Tibial artery (tissue), 4 donors: ENCODE measurements at regions of chr2 and their contacts with region 1.

Region 1: DNA sequence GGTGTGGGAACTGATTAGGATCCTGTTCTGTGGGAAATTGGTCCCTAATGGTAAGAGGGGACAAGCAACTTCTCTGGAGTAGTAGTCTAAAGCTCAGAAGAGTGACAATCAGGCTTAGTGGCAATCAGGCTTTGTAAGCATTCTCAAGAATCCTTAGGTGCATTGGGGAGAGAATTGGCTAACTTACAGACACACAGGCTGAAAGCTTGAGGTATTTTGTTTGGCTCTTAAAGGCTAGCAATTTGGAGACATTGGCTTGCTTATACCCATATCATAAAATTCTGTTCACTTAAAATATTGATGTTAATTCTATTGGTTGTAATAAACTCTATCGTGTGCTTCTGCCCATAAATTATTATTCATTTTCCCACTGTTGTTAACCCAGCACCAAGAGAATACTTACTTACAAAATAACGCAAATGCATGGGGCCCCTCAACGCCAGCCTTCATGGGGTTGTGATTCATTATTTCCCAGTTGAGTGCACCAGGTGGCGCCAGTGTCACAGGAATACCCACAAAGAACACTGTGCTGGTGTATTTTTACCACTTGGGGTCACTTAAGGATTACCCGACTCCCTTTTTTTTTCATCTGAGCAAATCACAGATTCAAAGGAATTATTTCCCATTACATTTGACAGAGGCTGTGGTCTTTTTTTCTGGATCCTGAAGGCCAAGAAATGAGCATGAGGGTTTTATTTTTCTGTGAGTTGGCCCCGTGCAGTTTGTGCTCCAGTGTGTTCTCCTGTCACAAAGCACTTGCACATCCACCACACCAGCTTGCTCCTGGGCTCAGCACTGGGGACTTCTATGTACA is 45.5 kb downstream of the DDX1 start:
- DNase-seq: peak; percentile 75 to 83
- H3K4me3 ChIP-seq: no peak overlapping the region
- H3K27ac ChIP-seq: peak overlapping the region in 1 of 2 donors; percentile 42
- H3K4me1 ChIP-seq: peaks cover 0 to 69% (median 31%) of the 10 kb centered on the region in 4 donors
- H3K27me3 ChIP-seq: no peaks in the 10 kb centered on the region
- CTCF ChIP-seq: peak; percentile 80 to 95

Region 2: DNA sequence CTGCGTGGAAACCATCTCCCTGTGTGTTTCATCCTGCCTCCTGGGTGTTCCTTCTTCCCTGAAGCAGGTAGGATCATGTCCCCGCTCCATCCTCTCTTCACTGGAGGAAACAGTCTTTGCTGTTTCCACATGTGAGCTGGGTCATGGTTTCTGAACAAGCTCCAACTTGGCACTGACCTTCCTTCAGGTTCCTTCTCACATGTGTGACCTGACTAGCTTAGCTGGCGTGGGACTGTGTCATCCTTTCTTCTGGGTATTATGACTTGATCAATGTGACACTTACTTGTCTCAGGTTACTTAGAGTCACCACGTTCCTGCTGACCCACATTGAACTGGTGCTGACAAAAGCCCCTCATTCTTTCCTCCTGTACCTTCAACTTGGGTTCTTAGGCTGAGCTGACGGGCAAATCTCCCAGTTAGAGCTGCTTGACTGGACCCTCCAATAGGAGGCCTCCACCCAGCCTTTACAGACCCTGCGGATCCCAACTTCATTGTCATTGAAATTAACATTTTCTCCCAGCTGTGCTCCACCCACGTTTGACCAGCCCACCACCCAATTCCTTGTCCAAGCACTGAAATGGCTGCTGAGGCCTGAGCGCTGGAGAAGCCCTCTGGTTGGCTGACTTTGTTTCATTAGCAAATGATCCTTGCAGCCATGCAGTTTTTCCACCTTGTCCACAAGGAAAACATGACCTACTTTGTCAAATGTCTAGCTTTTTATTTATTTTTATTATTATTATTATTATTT is 82.6 kb after region 1 on chr2:
- intact Hi-C with region 1: no loop called
- DNase-seq: peak in 1 of 2 donors; percentile 17
- H3K4me3 ChIP-seq: no peak overlapping the region
- H3K27ac ChIP-seq: no peak overlapping the region
- H3K4me1 ChIP-seq: no peaks in the 10 kb centered on the region
- H3K27me3 ChIP-seq: no peaks in the 10 kb centered on the region
- CTCF ChIP-seq: no peak

Region 3: GRCh38 chr2:15939854-15940660 is 302.9 kb after region 1 on chr2 and contains the start of gene MYCN:
- intact Hi-C with region 1: loop called (anchors 10 kb)
- DNase-seq: peak in 1 of 2 donors; percentile 27
- H3K4me3 ChIP-seq: peak within 1 kb of the TSS; percentile 34 to 52
- H3K27ac ChIP-seq: no peak within 1 kb of the TSS
- H3K4me1 ChIP-seq: peaks cover 0 to 36% (median 31%) of the 10 kb centered on the region in 4 donors
- H3K27me3 ChIP-seq: peaks cover 0 to 65% of the 10 kb centered on the region in 2 donors
- CTCF ChIP-seq: peak in 1 of 2 experiments; percentile 51

Region 4: DNA sequence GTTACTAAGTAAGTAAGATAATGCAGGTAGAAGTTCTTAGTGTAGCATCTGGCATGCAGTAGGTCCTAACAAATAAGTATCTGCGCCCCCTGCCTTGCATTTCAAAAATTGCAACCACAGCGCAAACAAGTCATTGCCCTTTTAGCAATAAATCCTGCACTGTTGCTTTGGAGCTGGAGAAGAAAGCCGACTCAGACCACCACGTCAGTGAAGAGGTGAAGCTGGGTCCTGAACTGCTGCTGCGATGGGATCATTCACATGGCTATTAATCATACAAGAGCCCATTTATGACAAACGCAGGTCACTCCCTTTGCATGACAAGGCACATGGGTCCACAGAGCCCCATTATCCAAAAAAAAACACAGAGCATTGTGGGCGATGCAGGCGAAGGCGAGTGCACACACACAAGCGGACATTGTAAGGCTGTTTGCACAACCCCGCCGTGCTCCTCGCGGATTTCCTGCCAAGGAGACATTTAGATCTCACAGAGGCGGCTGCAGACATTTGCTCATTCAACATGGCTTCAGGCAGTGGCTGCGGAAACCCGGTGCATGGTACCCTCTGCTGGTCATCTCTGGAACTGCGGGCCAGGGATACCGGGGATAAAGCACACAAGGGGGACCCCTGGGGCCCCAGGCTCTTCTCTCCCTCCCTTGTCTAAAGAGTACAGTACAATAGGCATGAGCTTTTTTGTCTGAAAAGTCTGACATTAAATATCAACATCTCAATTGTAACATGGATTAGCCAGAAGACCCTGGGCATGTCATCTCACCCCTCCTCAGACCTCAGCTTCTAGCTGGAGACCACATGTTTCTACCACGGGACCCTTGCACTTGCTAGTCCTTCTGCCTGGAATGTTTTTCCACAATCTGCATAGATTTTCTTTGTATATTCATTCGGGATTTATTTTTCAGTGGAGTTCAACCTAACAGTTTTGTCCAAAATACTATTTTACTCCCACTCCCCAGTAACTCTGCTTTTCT is 971.8 kb after region 1 on chr2:
- intact Hi-C with region 1: loop called (anchors 5 kb)
- DNase-seq: peak; percentile 80 to 87
- H3K4me3 ChIP-seq: peak overlapping the region; percentile 37 to 48
- H3K27ac ChIP-seq: no peak overlapping the region
- H3K4me1 ChIP-seq: peaks cover 0 to 9% (median 3%) of the 10 kb centered on the region in 4 donors
- H3K27me3 ChIP-seq: peaks cover 0 to under 1% of the 10 kb centered on the region in 2 donors
- CTCF ChIP-seq: peak; percentile 89 to 97